CD4-positive, alpha-beta memory T cell (primary cell): ENCODE measurements at regions of chr1 and their contacts with region 1.

Region 1: DNA sequence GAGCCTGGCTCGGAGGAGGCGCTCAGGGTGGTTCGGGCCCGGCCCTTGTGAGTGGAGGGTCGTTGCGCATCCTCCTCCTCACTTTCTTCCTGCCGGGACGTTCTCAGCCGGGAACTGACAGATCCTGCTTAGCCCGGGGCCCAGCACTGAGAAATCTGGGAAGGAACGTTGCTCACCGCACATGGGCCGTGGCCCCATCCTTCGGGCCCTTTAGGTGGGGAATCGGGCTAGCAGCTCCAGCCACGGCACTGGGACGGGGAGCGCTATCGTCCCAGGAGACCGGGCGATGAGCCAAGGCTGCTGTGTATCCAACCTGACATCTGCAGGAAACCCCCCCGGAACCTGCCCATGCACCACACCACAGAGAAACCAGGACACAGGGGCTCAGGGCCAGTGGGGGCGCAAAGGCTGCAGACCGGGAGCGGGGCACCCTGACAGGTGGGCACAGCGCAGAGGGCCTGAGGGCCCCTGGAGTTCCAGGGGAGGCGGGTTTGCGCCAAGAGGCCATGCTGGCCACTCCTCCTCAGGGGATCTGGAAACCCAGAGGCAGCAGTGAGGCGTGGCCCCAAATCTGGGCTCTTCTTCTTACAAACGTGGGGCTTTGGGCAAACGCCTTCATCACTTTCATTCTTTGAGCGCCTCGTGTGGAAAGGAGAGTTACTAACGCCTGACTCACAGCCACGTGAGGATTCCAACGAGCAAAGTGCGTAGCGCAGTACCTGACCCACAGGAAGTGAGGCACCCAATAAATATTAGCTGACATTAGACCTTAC is at the start of gene SH2D5:
- DNase-seq: peak; percentile 54 to 87 (median 63)
- H3K4me3 ChIP-seq: peak within 1 kb of the TSS; percentile 68 to 69
- H3K4me3 Mint-ChIP-seq: peak within 1 kb of the TSS; percentile 78 to 91 (median 88)
- H3K27ac ChIP-seq: no peak within 1 kb of the TSS
- H3K27ac Mint-ChIP-seq: peak within 1 kb of the TSS in 6 of 7 donors; percentile 54 to 85 (median 77)
- H3K4me1 ChIP-seq: peaks cover 17% of the 10 kb centered on the region
- H3K4me1 Mint-ChIP-seq: peaks cover 10 to 23% (median 13%) of the 10 kb centered on the region in 4 donors
- H3K27me3 ChIP-seq: no peaks in the 10 kb centered on the region
- H3K27me3 Mint-ChIP-seq: peaks cover 3 to 19% of the 10 kb centered on the region in 2 donors
- total RNA-seq, gene SH2D5: 0.38 TPM in 1 of 2 experiments, not detected in the other

Region 2: DNA sequence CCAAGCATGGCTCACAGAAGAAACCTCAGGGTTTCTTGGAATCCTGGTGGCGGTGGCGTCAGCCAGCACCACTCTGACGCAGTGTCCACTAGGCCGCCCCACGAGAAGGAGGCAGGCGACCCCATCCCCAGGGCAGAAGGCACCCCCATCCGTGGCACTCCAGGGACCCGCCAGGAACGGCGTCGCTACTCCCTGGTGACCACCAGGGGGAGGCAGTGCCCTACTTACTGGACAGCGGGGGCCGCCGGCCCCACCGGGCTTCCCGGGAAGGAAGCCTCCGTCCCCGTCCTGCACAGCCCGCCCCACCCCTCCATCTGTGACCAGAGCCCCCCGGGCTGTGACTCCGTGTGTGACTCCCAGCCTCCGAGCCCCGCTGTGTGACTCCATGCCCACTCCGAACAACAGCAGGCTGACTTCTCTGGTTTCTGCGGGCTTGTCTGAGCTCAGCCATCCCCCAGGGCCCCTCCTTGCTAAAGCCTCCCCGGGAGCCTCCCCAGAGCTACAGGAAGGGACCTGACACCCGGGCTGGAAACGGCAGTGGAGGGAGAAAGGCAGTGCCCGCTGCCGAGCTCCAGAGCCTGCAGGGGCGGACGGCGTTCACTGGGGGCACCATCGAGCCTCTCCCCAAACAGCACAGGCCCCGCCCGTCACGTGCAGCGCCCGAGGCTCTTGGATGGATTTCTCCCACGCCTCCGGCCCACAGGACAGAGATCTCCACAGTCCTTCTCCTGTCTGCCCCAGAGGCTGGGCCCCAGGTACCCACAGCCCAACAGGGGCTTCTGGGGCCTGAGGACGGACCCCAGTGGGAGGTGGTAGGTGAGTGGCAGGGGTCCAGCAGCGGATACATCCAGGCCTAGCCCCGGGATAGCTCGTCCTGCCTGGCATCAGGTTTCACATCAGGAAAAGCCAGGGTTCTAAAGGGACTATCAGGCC is 36.1 kb before region 1 on chr1:
- CTCF ChIA-PET with region 1: interaction called, 12 read pairs
- POLR2A ChIA-PET with region 1: interaction called, 7 read pairs
- intact Hi-C with region 1: loop called (anchors 1 kb)
- DNase-seq: peak; percentile 60 to 71 (median 68)
- H3K4me3 ChIP-seq: peak overlapping the region; percentile 84 to 90
- H3K4me3 Mint-ChIP-seq: peak overlapping the region; percentile 87 to 95 (median 89)
- H3K27ac ChIP-seq: peak overlapping the region; percentile 46
- H3K27ac Mint-ChIP-seq: peak overlapping the region in 6 of 7 donors; percentile 22 to 92 (median 68)
- H3K4me1 ChIP-seq: peaks cover 10% of the 10 kb centered on the region
- H3K4me1 Mint-ChIP-seq: peaks cover 2 to 12% (median 6%) of the 10 kb centered on the region in 4 donors
- H3K27me3 ChIP-seq: no peaks in the 10 kb centered on the region
- H3K27me3 Mint-ChIP-seq: peaks cover 0 to 3% of the 10 kb centered on the region in 2 donors

Region 3: DNA sequence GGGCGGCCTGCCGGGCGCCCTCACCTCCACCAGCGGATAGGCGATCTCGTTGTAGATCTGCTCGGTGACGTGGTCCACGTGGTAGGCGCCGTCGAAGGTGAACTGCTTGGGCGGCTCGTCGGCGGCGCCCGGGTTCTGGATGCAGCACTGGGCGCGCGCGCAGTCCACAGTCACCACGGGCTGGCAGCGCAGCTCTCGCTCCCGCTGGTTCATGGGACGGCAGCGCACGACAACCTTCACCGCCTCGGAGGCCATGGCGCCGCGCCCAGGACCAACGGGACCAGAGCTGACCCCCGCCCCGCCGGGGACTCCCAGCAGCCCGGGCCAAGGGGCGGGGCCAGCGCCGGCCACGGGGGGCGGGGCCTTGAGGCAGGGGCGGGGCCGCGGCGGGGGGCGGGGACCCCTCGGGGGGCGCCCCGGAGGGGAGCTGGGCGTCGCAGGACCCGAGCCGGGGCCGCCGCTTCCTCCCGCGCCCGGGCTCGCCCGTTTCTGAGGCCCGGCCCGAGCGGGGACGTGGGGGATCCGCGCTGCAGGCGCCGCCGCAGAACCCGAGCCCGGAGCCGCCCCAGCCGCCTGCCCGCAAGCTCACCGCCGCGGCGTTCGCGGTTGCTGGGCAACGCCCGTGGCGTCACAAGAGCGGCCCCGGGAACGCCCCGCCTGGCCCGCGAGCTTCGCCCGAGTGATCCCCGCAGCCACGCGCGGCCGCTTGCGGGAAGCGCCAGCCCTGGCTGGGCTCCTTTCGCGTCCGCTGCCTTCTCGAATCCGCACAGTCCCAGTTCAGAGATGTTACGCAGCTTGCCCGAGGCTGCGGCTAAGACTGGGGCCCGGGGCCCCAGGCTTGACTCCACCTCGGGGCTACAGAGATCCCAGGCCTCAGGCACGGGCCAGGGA is 15.1 kb before region 1 on chr1 and contains the start of gene KIF17:
- CTCF ChIA-PET with region 1: interaction called, 8 read pairs
- POLR2A ChIA-PET with region 1: interaction called, 6 read pairs
- intact Hi-C with region 1: loop called (anchors 2 kb)
- DNase-seq: peak; percentile 58 to 75 (median 68)
- H3K4me3 ChIP-seq: peak within 1 kb of the TSS in 1 of 2 donors; percentile 18
- H3K4me3 Mint-ChIP-seq: peak within 1 kb of the TSS; percentile 60 to 85 (median 70)
- H3K27ac ChIP-seq: no peak within 1 kb of the TSS
- H3K27ac Mint-ChIP-seq: peak within 1 kb of the TSS; percentile 43 to 87 (median 66)
- H3K4me1 ChIP-seq: no peaks in the 10 kb centered on the region
- H3K4me1 Mint-ChIP-seq: peaks cover 0 to 10% (median 6%) of the 10 kb centered on the region in 4 donors
- H3K27me3 ChIP-seq: peaks cover 7% of the 10 kb centered on the region
- H3K27me3 Mint-ChIP-seq: peaks cover 9 to 15% of the 10 kb centered on the region in 2 donors
- total RNA-seq, gene KIF17: not detected